Activated T-helper 1 cell treated with anti-CD3 and anti-CD28 coated beads, Interleukin-12 subunit alpha, Interleukin-12 subunit beta, Interleukin-2, Interleukin-4 antibody, amounts not matched to agents 30 ng/mL and 10 ng/mL and 1 ng/mL, durations not matched to agents 14 hours and 24 hours and 36 hours (primary cell): ENCODE measurements at regions of chr4 and their contacts with region 1.

Region 1: DNA sequence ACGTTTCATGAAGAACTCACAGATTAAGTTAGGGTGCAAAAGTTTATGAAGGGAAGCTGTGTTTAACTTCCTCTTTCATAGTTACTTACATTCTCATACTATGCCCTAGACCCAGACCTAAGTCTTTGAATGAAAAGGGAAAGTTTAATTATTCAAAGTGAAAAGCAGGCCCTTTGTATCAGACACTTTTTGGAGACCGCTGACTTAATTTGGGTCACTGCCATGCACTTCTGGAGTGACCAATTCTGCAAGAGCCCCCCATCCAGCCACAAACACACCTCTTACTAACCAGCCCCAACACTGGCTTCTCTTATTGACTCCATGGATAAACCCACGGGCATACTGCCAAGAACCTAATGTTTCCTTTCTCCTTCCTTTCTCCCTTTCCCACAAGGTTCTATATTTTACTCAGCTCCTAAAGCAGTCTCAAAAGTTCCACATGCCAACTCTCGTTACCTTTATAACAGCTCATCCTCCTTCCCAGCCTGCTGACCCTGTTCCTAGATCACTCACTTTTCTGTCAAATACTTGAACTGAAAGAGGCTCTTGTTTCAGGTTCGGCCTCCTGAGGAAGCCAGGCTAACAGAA is 34.5 kb downstream of the ABCE1 start:
- DNase-seq: no peak
- H3K4me3 Mint-ChIP-seq: peak overlapping the region; percentile 63
- H3K27ac Mint-ChIP-seq: peak overlapping the region; percentile 52
- H3K4me1 Mint-ChIP-seq: peaks cover 88% of the 10 kb centered on the region
- H3K27me3 Mint-ChIP-seq: no peaks in the 10 kb centered on the region

Region 2: DNA sequence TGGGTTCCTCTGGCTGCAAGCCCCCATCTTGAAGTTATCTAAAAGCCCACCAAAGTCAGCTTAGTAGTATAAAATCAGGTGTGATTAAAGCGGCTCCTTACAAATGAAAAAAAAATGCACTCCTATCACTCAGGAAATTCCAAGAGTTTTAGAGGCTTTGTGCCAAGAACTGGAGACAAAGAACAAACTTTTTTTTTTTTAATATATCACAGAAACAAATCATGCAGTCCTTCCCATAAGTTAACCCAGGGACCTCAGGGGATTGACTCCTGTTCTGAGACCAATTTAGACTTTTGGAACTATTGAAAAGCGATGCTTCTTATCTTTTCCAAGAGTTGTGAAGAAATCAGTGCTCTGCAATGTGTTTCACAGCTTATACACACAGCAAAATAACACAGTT is 433.0 kb before region 1 on chr4:
- intact Hi-C with region 1: no loop called
- DNase-seq: no peak
- H3K4me3 Mint-ChIP-seq: no peak overlapping the region
- H3K27ac Mint-ChIP-seq: no peak overlapping the region
- H3K4me1 Mint-ChIP-seq: no peaks in the 10 kb centered on the region
- H3K27me3 Mint-ChIP-seq: no peaks in the 10 kb centered on the region

Region 3: DNA sequence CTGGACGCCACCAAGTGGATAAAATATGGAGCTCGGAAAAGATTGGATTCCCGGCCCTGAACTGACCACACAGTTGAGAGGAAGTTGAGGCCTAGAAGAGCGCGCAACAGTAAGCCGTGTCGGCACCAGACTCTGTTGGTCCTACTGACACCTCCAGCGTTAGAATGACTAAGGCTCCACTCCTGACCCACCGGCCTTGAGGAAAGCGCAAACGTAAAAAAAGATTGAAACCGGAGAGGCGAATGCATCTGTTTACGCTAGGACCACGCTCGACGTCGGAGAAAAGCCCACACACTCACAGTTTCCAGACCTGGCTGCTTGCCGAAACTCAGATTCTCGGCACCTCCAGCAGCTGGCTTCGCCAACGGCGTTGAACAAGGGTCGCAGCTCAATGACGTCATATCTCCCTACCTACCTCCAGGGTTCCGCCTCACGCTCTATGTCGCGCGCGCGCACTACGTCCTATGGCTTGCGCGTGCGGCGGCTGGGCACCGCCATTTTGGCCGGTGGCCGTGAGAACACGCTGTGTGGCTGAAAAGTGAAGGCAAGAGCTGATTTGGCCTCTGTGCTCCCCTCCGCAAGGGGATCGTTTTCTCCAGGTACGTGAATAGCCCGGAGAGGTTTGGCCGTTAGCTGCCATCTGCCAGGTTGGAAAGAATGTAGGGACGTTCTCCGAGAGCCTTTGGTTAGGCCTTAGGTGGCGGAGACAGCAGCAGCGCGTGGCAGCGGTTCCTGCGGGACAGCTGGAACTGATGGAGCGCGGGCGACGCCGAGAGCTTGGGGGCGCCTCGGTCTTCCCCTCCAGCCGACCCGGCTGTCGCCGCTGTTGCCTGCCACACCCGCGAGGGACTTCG is 34.6 kb before region 1 on chr4 and contains the starts of genes ABCE1 and ANAPC10:
- intact Hi-C with region 1: loop called (anchors 1 kb)
- DNase-seq: peak; percentile 94
- H3K4me3 Mint-ChIP-seq: peak within 1 kb of the TSS; percentile 92
- H3K27ac Mint-ChIP-seq: peak within 1 kb of the TSS; percentile 100
- H3K4me1 Mint-ChIP-seq: peaks cover 27% of the 10 kb centered on the region
- H3K27me3 Mint-ChIP-seq: no peaks in the 10 kb centered on the region
- total RNA-seq, gene ABCE1: 155 and 176 TPM in 2 replicates
- total RNA-seq, gene ANAPC10: 25.4 and 32.1 TPM in 2 replicates

Region 4: DNA sequence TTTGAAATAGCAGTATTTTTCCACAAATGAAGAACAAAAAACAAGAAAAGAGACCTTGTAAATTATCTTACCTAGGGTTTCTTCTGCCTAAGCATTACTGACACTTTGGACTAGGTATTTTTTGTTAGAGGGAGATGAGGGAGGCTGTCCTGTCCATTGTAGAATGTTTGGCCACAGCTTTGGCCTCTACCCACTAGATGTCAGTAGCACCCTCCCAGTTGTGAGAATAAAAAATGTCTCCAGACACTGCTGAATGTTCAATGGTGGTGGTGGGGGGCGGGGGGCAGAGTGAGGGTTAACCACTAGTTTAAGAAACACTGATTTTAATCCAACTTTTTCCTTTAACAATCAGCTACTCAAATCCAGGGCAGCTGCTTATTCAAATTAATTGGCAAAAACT is 22.0 kb after region 1 on chr4:
- intact Hi-C with region 1: loop called (anchors 2 kb)
- DNase-seq: no peak
- H3K4me3 Mint-ChIP-seq: no peak overlapping the region
- H3K27ac Mint-ChIP-seq: no peak overlapping the region
- H3K4me1 Mint-ChIP-seq: peaks cover 18% of the 10 kb centered on the region
- H3K27me3 Mint-ChIP-seq: no peaks in the 10 kb centered on the region